ENCODE measurements at regions of chr6 and their contacts with region 1.

Region 1: DNA sequence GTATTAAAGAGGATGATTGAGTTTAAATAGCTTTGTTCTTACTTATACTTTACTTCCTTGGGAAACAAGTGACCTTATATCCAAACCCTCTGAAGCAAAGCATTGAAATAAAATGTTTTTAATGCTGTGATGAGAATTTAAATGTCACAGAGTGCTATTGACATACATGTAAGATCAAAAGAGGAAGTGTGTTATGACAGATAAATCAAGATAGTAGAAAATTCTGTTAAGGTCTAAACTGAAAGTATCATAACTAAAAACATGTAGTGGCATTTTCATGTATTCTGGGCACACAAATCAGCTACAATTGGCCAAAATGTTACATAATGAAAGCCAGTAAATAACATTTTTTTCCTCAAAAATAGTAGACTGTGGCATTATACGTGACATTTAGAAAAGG is 318.0 kb downstream of the GRIK2 start:
- DNase-seq: no peak
- ATAC-seq: no peak
- H3K4me3 ChIP-seq: no peak overlapping the region
- H3K4me3 Mint-ChIP-seq: no peak overlapping the region
- H3K27ac ChIP-seq: no peak overlapping the region
- H3K27ac Mint-ChIP-seq: no peak overlapping the region
- H3K4me1 ChIP-seq: no peaks in the 10 kb centered on the region
- H3K4me1 Mint-ChIP-seq: no peaks in the 10 kb centered on the region
- H3K27me3 ChIP-seq: no peaks in the 10 kb centered on the region
- H3K27me3 Mint-ChIP-seq: no peaks in the 10 kb centered on the region
- CTCF ChIP-seq: no peak

Region 2: GRCh38 chr6:101683884-101684283 is 27.6 kb before region 1 on chr6:
- CTCF ChIA-PET with region 1: no interaction called
- POLR2A ChIA-PET with region 1: no interaction called
- intact Hi-C with region 1: no loop called
- DNase-seq: no peak
- ATAC-seq: no peak
- H3K4me3 ChIP-seq: no peak overlapping the region
- H3K4me3 Mint-ChIP-seq: no peak overlapping the region
- H3K27ac ChIP-seq: no peak overlapping the region
- H3K27ac Mint-ChIP-seq: no peak overlapping the region
- H3K4me1 ChIP-seq: no peaks in the 10 kb centered on the region
- H3K4me1 Mint-ChIP-seq: no peaks in the 10 kb centered on the region
- H3K27me3 ChIP-seq: no peaks in the 10 kb centered on the region
- H3K27me3 Mint-ChIP-seq: no peaks in the 10 kb centered on the region
- CTCF ChIP-seq: no peak

Region 3: DNA sequence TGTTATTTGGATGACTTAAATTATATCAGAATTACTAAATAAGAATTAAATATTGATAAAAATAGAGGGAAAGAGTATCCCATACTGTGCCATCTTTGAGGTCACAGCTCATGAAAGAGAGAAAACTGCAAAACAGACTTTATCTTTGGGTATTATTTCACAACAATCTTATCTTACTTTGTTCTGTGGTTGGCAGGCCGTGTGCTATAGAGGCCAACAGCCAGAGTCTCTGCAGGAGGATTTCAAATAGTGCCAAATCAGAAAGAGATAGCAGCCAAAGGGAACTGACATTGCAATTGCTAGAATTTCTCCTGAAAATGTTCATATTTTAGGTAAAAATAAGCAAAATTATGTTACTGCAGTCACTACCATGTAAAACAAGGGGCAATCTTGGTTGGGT is 36.2 kb after region 1 on chr6:
- CTCF ChIA-PET with region 1: no interaction called
- POLR2A ChIA-PET with region 1: no interaction called
- intact Hi-C with region 1: loop called in 1 of 2 experiments (anchors 5 kb)
- DNase-seq: no peak
- ATAC-seq: no peak
- H3K4me3 ChIP-seq: no peak overlapping the region
- H3K4me3 Mint-ChIP-seq: no peak overlapping the region
- H3K27ac ChIP-seq: no peak overlapping the region
- H3K27ac Mint-ChIP-seq: no peak overlapping the region
- H3K4me1 ChIP-seq: no peaks in the 10 kb centered on the region
- H3K4me1 Mint-ChIP-seq: no peaks in the 10 kb centered on the region
- H3K27me3 ChIP-seq: no peaks in the 10 kb centered on the region
- H3K27me3 Mint-ChIP-seq: no peaks in the 10 kb centered on the region
- CTCF ChIP-seq: no peak